ENCODE measurements at regions of chr3 and their contacts with region 1.

Region 1: DNA sequence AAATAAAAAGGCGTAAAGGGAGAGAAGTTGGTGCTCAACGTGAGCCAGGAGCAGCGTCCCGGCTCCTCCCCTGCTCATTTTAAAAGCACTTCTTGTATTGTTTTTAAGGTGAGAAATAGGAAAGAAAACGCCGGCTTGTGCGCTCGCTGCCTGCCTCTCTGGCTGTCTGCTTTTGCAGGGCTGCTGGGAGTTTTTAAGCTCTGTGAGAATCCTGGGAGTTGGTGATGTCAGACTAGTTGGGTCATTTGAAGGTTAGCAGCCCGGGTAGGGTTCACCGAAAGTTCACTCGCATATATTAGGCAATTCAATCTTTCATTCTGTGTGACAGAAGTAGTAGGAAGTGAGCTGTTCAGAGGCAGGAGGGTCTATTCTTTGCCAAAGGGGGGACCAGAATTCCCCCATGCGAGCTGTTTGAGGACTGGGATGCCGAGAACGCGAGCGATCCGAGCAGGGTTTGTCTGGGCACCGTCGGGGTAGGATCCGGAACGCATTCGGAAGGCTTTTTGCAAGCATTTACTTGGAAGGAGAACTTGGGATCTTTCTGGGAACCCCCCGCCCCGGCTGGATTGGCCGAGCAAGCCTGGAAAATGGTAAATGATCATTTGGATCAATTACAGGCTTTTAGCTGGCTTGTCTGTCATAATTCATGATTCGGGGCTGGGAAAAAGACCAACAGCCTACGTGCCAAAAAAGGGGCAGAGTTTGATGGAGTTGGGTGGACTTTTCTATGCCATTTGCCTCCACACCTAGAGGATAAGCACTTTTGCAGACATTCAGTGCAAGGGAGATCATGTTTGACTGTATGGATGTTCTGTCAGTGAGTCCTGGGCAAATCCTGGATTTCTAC is at the start of gene RARB:
- DNase-seq: peak; percentile 83
- ATAC-seq: peak; percentile 93
- total RNA-seq, gene RARB: 17.5 TPM

Region 2: DNA sequence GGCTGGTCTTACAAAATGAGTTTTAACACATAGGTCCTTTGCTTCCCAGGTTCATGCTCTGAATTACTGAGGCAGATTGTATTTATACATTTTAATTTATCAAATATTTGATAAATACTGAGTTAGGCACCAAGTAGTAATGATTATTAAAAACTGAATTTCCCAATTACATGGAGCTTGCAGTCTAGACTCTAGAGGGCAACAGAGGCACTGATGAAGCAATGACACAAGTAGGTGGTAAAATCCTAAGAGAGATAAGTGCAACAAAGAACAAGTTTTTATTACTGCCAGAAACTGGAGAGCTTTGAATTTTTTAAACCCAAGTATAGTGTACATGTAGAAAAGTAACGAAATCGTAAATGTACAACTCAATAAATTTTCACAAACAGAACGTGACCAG is 406.3 kb before region 1 on chr3:
- intact Hi-C with region 1: loop called (anchors 5 kb)
- DNase-seq: no peak
- ATAC-seq: peak; percentile 54

Region 3: DNA sequence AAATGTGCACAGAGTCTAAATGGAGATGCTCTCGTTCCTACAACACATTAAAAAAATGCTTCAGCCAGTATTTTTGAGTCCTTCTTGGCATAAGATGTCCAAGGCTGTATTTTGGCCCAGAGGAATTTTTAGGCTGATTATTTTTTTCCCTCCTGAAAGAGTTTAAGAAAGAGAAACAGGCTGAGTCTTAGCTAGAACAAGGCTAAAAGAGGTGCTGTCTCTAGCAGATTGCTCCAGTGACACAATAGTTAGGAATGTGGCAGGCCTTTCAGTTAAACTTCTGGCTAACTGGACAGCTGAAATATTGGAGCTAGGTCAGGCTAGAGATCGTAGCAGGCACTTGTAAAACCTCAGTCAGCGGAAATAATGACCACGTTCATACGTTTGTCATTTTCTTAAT is 271.5 kb before region 1 on chr3:
- intact Hi-C with region 1: loop called (anchors 10 kb)
- DNase-seq: no peak
- ATAC-seq: peak; percentile 78

Region 4: DNA sequence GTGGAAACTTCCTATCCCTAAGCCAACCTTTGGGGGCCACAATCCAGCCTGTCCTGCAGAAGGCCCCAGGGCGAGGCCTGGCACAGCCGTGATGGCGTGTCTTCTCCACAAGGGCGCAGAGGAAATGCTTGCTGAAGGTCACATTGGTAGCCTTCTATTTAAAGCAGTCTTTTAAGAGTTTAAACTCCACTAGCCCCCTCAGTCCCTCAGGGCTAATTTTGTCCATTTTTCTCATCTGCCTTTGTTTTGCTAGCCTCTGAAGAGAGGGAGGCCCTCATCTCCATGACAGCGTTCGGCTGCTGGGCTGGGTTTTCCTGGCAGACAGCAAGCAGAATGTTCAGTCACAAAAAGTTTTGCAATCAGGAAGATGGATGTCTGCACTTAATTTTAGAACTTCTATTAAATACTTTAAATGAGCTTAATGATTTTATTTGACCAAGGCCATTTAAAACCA is 40.7 kb after region 1 on chr3:
- intact Hi-C with region 1: loop called (anchors 5 kb)
- DNase-seq: peak; percentile 81
- ATAC-seq: peak; percentile 89

Region 5: GRCh38 chr3:25587094-25587493 is 158.9 kb after region 1 on chr3:
- intact Hi-C with region 1: loop called (anchors 1 kb)
- DNase-seq: no peak
- ATAC-seq: no peak